ENCODE measurements at regions of chr1 and their contacts with region 1.

Region 1: DNA sequence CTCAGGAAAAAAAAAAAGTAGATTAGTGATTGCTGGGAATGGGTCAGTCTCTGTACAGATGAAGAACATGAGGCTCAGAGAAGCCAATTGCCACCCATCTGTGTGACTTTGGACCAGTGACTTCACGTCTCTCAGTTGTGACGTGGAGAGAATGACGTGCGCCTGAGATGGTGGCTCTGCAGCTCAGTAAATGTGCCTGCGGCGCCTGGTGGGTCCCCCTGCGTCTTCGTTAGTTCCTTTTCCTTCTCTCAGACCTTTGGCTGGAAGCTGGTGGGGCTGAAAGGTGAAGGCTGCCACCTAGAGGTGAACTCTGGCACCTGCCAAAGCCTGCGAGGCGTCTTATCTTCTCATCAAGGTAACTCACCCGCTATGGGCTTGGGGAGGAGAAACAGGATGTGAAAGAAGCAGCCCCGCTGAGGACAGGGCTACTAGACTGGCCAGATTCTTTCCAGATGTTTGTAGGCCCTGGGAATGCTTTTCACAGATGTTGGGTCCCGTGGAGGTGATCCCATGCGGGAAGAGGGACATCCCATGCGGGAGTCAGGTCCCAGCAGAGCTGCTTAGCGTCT is 8.7 kb upstream of the E2F2 start:
- DNase-seq: peak; percentile 87
- H3K4me3 ChIP-seq: no peak overlapping the region
- H3K27ac ChIP-seq: no peak overlapping the region
- H3K4me1 ChIP-seq: peaks cover 8% of the 10 kb centered on the region
- H3K27me3 ChIP-seq: no peaks in the 10 kb centered on the region
- CTCF ChIP-seq: peak; percentile 95 to 98

Region 2: DNA sequence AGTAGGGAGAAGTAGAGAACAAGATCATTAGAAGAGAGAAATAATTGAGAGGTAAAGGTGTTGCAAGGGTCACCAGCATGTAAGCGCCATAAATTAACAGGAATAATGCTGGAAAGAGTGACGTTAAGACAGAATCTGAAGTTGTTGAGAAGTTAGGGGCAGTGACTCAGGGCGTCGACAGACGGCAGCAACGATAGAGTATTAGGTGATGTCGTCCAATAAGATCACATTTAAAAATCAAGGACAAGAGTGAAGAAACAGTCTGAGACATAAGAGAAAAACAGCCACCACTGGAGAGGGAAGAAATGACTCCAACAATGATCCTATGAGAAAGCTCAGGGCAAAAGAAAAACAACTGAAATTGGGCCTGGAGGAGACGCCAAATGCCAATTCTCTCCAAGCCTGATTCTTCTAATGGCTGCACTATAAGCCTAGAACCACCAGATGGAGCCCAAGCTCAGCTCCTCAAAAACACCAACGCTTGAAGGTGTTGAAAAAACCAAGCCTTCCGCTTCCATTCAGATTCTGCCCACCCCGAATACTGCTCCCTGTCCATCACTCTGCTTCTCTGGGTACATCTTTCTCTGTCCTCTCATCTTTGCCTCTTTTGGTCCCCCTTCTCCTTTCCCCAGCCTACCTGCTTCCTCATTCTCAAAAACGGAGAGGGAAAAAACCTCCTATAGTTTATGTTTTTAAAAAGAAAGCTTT is 441.2 kb before region 1 on chr1:
- CTCF ChIA-PET with region 1: no interaction called
- dilution Hi-C with region 1: no loop called
- in situ Hi-C with region 1: no loop called
- intact Hi-C with region 1: loop called (anchors 2 kb)
- DNase-seq: peak; percentile 65
- H3K4me3 ChIP-seq: no peak overlapping the region
- H3K27ac ChIP-seq: no peak overlapping the region
- H3K4me1 ChIP-seq: peaks cover 59% of the 10 kb centered on the region
- H3K27me3 ChIP-seq: no peaks in the 10 kb centered on the region
- CTCF ChIP-seq: peak; percentile 92 to 93

Region 3: DNA sequence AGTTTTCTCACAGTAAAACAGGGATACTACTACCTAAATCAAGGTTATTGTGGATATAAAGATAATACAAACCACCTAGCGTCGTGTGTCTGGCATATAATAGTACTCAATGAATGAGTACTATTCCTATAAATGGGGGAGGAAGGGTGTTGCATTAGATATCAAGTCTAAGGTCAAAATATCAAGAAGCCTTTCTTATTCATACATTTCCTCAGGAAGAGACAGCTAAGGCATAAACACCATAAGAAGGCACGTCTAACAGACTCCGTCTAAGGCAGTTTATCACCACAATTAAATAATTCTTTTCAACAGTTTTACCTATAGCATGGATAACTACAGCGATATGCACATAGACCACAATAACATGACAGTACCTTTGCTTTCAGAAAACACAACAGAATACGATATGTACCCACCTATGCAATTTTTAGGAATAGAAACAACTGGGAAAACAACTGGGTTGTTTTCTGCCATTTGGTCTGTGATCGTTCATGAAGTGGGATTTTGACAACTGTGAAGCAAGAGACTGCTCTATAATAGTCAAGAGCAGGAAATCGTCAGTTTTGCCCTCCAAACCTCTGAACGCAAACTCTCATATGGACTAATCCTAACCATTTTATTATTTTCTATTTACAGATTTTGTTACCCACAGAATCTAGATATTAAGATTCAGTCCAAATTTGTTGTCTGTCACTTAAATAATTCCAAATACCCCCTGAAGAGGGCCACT is 248.8 kb before region 1 on chr1:
- CTCF ChIA-PET with region 1: no interaction called
- dilution Hi-C with region 1: no loop called
- in situ Hi-C with region 1: no loop called
- intact Hi-C with region 1: loop called (anchors 5 kb)
- DNase-seq: no peak
- H3K4me3 ChIP-seq: no peak overlapping the region
- H3K27ac ChIP-seq: no peak overlapping the region
- H3K4me1 ChIP-seq: no peaks in the 10 kb centered on the region
- H3K27me3 ChIP-seq: no peaks in the 10 kb centered on the region
- CTCF ChIP-seq: no peak

Region 4: DNA sequence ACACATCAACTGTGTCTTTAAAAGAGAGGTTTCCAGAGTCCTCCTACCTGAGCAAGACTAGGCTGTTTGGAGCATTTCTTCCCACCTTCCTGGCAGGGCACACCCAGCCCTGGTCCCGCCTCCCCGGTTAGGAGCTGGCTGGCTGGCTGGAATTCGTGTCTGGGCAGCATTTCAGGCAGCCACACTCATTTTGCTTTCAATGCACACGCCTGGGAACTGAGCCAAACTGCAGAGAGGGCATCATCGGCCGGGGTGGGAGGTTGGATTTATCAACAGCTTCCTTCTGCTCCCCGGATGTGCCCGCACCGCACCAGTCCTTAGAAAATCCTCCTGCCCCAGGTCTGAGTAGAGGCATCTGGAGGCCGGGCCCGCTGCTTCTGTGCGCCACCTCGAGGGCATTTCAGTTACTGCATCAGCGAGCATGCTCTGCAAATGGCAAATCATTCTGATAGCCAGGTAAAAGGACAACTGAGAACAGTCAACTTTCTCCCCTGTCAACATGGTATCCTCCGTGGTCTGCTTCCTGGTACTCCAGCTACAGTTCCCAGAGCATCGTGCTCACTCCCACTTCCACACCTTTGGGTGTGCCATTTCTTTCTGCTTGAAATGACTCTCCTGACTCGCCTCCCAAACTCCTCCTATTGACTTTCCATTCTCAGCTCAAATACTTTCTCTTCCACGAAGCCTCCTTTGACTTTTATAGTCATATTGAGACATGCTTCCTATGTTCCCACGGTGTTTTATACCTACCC is 135.9 kb before region 1 on chr1:
- CTCF ChIA-PET with region 1: interaction called, 6 read pairs
- dilution Hi-C with region 1: no loop called
- in situ Hi-C with region 1: no loop called
- intact Hi-C with region 1: loop called (anchors 1 kb)
- DNase-seq: peak; percentile 100
- H3K4me3 ChIP-seq: peak overlapping the region in 2 of 3 experiments; percentile 4 to 21
- H3K27ac ChIP-seq: peak overlapping the region; percentile 85
- H3K4me1 ChIP-seq: peaks cover 20% of the 10 kb centered on the region
- H3K27me3 ChIP-seq: no peaks in the 10 kb centered on the region
- CTCF ChIP-seq: peak; percentile 97 to 98

Region 5: DNA sequence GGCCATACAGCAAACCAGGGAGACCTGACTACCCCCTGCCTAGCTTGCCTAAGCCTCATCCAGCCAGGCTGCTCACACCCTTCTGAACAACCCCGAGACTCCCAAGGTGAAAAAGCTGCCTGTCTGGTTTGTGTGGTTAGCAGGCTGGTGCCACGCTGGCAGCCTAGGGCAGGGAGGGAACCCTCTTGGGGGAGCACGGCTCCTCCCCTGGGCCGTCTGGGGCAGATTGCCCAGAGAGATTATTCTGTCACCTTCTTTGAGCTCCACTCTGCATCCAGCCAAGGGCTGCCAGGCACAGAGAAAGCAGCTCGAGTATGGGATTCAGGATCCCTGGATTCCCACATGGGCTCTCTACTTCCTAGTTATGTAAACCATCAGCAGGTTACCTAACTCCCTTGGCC is 87.8 kb before region 1 on chr1:
- CTCF ChIA-PET with region 1: no interaction called
- dilution Hi-C with region 1: no loop called
- in situ Hi-C with region 1: no loop called
- intact Hi-C with region 1: no loop called
- DNase-seq: peak; percentile 94
- H3K4me3 ChIP-seq: no peak overlapping the region
- H3K27ac ChIP-seq: no peak overlapping the region
- H3K4me1 ChIP-seq: peaks cover 31% of the 10 kb centered on the region
- H3K27me3 ChIP-seq: no peaks in the 10 kb centered on the region
- CTCF ChIP-seq: no peak

Region 6: DNA sequence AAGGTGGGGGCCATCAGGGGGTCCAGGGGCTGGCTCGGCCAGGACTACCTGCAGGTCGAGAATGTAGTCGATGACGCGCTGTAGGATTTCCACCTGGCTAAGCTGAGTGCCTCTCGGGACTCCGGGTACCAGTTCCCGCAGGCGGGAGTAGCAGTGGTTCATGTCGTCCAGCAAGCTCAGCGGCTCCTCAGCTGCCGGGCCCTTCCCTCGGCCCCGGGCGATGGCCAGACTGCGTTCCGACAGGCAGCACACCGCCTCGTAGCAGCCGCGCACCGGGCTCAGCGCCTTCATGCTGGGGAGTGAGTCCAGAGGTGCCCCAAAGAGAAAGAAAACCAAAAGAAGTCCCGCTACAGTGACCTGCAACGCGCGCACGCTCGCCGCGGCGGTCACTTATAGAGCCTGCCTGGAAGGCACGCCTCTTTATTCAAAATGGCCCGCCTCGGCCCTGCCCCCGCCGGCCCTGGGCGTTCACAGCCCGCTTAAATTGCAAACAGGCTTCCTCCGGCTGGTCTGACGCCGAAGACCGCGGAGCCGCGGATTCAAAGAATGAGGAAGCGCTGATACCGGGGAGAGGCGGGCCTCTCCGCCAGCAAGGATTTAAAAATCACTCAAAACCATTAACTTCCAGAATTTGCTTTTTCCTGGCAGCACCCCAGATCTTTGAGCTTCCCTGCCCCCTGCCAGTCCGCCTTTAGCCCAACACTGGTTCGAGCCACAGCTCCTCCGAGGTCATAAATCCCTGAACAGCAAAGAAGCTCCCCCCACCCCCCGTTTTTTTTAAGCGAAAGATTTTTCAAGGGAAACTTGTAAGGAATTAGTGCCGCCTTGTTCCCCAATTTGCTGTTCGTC is 19.6 kb after region 1 on chr1 and contains the start of gene ID3:
- CTCF ChIA-PET with region 1: interaction called, 12 read pairs
- dilution Hi-C with region 1: no loop called
- in situ Hi-C with region 1: no loop called
- intact Hi-C with region 1: no loop called
- DNase-seq: peak; percentile 96
- H3K4me3 ChIP-seq: peak within 1 kb of the TSS; percentile 61 to 76 (median 75)
- H3K27ac ChIP-seq: peak within 1 kb of the TSS; percentile 76
- H3K4me1 ChIP-seq: peaks cover 48% of the 10 kb centered on the region
- H3K27me3 ChIP-seq: no peaks in the 10 kb centered on the region
- CTCF ChIP-seq: no peak
- total RNA-seq, gene ID3: 53.6 to 53.8 TPM

Region 7: DNA sequence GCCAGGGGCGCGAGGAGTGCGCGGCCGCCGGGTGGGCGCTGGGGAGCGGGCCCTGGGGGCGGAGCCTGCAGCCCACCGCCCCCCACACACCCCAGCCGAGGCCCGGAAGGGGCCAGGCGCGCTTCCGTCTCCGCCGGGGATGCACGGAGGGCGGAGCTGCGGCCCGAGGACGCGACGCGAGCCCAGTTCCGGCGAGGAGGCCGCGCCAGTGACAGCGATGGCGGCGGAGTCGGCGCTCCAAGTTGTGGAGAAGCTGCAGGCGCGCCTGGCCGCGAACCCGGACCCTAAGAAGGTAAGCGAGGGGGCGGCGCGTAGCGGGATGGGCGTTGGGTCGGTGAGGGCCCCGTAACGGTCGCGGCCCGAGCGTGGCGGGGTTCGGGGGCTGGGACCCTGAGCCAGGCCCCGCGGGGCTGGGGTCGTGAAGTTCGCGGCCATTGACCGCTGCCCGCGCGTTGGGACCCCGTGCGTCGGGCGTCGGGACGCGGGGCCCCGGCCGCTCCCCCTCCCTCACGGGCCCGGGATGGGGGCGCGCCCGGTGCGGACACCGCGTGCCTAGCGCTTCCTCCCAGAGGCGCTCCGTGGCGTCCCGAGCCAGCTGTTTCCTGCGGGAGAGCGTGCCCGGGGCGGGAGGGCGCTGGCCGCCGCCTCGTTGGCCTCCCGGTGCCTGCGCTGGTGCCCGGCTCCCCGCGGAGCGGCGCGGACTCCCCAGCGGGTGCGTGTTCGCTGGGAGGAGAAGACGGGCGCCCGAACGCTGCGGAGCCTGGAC is 203.7 kb after region 1 on chr1 and contains the start of gene ELOA:
- CTCF ChIA-PET with region 1: no interaction called
- dilution Hi-C with region 1: no loop called
- in situ Hi-C with region 1: loop called in 1 of 2 experiments (anchors 10 kb)
- intact Hi-C with region 1: loop called (anchors 2 kb)
- DNase-seq: peak; percentile 61
- H3K4me3 ChIP-seq: peak within 1 kb of the TSS; percentile 60 to 93 (median 84)
- H3K27ac ChIP-seq: peak within 1 kb of the TSS; percentile 63
- H3K4me1 ChIP-seq: peaks cover 16% of the 10 kb centered on the region
- H3K27me3 ChIP-seq: no peaks in the 10 kb centered on the region
- CTCF ChIP-seq: no peak
- total RNA-seq, gene ELOA: 38.0 to 59.9 TPM